ENCODE measurements at regions of chr2 and their contacts with region 1.

Region 1: GRCh38 chr2:159946326-159946999 is 116.0 kb downstream of the PLA2R1 start:
- DNase-seq: peak; percentile 89
- ATAC-seq: peak; percentile 90
- H3K4me3 ChIP-seq: 0 out of 2 replicates have a peak overlapping the region, but pooled peaks have one; percentile 2
- H3K27ac ChIP-seq: peak overlapping the region; percentile 68
- H3K4me1 ChIP-seq: peaks cover 25% of the 10 kb centered on the region
- H3K27me3 ChIP-seq: no peaks in the 10 kb centered on the region
- CTCF ChIP-seq: no peak

Region 2: DNA sequence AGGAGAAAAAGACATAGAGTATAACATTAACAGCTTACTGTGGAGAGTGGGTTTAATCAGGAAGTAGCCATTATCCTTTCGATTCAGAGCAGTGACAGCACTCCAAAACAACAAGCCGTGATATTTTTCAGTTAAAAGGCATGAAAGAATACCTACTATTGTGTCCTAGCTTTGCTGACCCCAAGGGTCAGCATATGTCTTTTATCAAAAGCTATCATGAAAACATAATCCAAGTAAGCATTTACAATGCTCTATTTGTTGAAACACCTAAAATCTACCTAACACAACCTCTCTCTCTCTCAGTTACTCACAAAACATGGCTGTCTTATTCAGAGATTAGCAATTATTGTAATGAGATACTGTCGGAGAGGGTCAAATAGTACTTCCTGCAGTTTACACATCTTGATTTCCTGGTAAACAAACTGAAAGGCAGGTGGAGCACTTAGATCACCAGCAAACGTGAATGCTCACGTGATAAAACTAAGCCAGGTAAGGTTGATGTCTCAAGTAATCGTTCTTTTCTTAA is 430.2 kb before region 1 on chr2:
- CTCF ChIA-PET with region 1: no interaction called
- POLR2A ChIA-PET with region 1: no interaction called
- intact Hi-C with region 1: no loop called
- DNase-seq: peak; percentile 69
- ATAC-seq: peak; percentile 93
- H3K4me3 ChIP-seq: peak overlapping the region; percentile 71
- H3K27ac ChIP-seq: peak overlapping the region; percentile 29
- H3K4me1 ChIP-seq: peaks cover 11% of the 10 kb centered on the region
- H3K27me3 ChIP-seq: no peaks in the 10 kb centered on the region
- CTCF ChIP-seq: no peak; the same call in 1 of the 2 replicates

Region 3: GRCh38 chr2:159960383-159960782 is 13.9 kb after region 1 on chr2:
- CTCF ChIA-PET with region 1: no interaction called
- POLR2A ChIA-PET with region 1: no interaction called
- intact Hi-C with region 1: loop called (anchors 1 kb)
- DNase-seq: peak; percentile 74
- ATAC-seq: peak; percentile 99
- H3K4me3 ChIP-seq: no peak overlapping the region
- H3K27ac ChIP-seq: peak overlapping the region; percentile 28
- H3K4me1 ChIP-seq: peaks cover 18% of the 10 kb centered on the region
- H3K27me3 ChIP-seq: no peaks in the 10 kb centered on the region
- CTCF ChIP-seq: no peak